ENCODE measurements at regions of chr20 and their contacts with region 1.

Region 1: GRCh38 chr20:34704177-34705007 is at the start of gene TP53INP2:
- DNase-seq: peak; percentile 82 to 97
- H3K4me3 ChIP-seq: peak within 1 kb of the TSS; percentile 76 to 85
- H3K27ac ChIP-seq: peak within 1 kb of the TSS; percentile 98 to 99
- H3K4me1 ChIP-seq: peaks cover 5 to 12% of the 10 kb centered on the region in 2 donors
- H3K27me3 ChIP-seq: no peaks in the 10 kb centered on the region
- CTCF ChIP-seq: no peak
- total RNA-seq, gene TP53INP2: 6.2 TPM

Region 2: GRCh38 chr20:34111702-34112599 is 592.4 kb before region 1 on chr20 and contains the start of gene EIF2S2:
- intact Hi-C with region 1: loop called (anchors 5 kb)
- DNase-seq: peak; percentile 87 to 97
- H3K4me3 ChIP-seq: peak within 1 kb of the TSS; percentile 79 to 95
- H3K27ac ChIP-seq: peak within 1 kb of the TSS; percentile 94 to 99
- H3K4me1 ChIP-seq: peaks cover 0 to 23% of the 10 kb centered on the region in 2 donors
- H3K27me3 ChIP-seq: no peaks in the 10 kb centered on the region
- CTCF ChIP-seq: no peak
- total RNA-seq, gene EIF2S2: 19.3 TPM

Region 3: GRCh38 chr20:34558320-34559218 is 145.8 kb before region 1 on chr20 and contains the start of gene MAP1LC3A:
- intact Hi-C with region 1: loop called (anchors 1 kb)
- DNase-seq: peak; percentile 91 to 98
- H3K4me3 ChIP-seq: peak within 1 kb of the TSS; percentile 92 to 95
- H3K27ac ChIP-seq: peak within 1 kb of the TSS; percentile 99 to 100
- H3K4me1 ChIP-seq: peaks cover 7% of the 10 kb centered on the region in 2 donors
- H3K27me3 ChIP-seq: no peaks in the 10 kb centered on the region
- CTCF ChIP-seq: no peak
- total RNA-seq, gene MAP1LC3A: 131 TPM

Region 4: GRCh38 chr20:34676642-34677373 is 27.6 kb before region 1 on chr20 and contains the start of gene PIGU:
- intact Hi-C with region 1: loop called (anchors 1 kb)
- DNase-seq: peak; percentile 81 to 97
- H3K4me3 ChIP-seq: peak within 1 kb of the TSS; percentile 65 to 98
- H3K27ac ChIP-seq: peak within 1 kb of the TSS; percentile 64 to 74
- H3K4me1 ChIP-seq: peaks cover 0 to 2% of the 10 kb centered on the region in 2 donors
- H3K27me3 ChIP-seq: no peaks in the 10 kb centered on the region
- CTCF ChIP-seq: peak; percentile 33 to 37 (median 34)
- total RNA-seq, gene PIGU: 41.5 TPM

Region 5: GRCh38 chr20:35741892-35742740 is 1037.7 kb after region 1 on chr20 and contains the start of gene RBM39:
- intact Hi-C with region 1: loop called (anchors 10 kb)
- DNase-seq: peak; percentile 98 to 100
- H3K4me3 ChIP-seq: peak within 1 kb of the TSS; percentile 84 to 86
- H3K27ac ChIP-seq: peak within 1 kb of the TSS; percentile 99 to 100
- H3K4me1 ChIP-seq: peaks cover 10 to 28% of the 10 kb centered on the region in 2 donors
- H3K27me3 ChIP-seq: no peaks in the 10 kb centered on the region
- CTCF ChIP-seq: peak; percentile 22 to 50 (median 42)
- total RNA-seq, gene RBM39: 232 TPM